ENCODE measurements at regions of chr5 and their contacts with region 1.

Region 1: DNA sequence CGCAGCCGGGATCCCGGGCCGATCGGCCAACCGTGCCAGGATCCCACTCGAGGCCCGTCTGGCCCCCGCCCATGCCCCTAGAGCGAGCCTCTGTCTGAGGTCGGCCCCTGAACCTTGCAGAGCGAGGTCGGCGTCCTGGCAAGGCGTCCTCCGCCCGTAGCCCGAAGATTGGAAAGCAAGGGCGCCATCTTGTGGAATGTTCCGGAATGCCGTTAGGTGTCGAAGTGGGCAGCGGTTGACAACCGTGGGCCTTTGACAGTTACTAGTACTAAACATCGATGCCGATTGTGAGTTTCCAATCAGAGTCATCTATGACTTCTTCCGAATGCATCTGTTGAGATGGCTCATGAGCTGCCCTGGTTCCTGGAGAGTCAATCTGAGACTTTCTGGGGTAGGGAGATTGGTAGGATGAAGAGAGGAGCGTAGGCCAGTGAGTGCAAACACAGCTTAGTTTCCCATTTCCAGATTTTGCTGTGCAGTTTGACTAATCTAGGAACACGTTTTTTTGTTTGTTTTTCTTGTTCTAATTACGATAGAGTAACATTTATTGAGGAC is 923 bp upstream of the PLK2 start:
- DNase-seq: peak; percentile 84 to 85
- ATAC-seq: peak; percentile 79 to 85
- H3K4me3 ChIP-seq: peak overlapping the region; percentile 70 to 92 (median 81)
- H3K27ac ChIP-seq: peak overlapping the region; percentile 90 to 96 (median 93)
- H3K4me1 ChIP-seq: no peaks in the 10 kb centered on the region
- H3K27me3 ChIP-seq: no peaks in the 10 kb centered on the region
- CTCF ChIP-seq: peak; percentile 49 to 77 (median 74)
- POLR2A ChIP-seq: no peak

Region 2: DNA sequence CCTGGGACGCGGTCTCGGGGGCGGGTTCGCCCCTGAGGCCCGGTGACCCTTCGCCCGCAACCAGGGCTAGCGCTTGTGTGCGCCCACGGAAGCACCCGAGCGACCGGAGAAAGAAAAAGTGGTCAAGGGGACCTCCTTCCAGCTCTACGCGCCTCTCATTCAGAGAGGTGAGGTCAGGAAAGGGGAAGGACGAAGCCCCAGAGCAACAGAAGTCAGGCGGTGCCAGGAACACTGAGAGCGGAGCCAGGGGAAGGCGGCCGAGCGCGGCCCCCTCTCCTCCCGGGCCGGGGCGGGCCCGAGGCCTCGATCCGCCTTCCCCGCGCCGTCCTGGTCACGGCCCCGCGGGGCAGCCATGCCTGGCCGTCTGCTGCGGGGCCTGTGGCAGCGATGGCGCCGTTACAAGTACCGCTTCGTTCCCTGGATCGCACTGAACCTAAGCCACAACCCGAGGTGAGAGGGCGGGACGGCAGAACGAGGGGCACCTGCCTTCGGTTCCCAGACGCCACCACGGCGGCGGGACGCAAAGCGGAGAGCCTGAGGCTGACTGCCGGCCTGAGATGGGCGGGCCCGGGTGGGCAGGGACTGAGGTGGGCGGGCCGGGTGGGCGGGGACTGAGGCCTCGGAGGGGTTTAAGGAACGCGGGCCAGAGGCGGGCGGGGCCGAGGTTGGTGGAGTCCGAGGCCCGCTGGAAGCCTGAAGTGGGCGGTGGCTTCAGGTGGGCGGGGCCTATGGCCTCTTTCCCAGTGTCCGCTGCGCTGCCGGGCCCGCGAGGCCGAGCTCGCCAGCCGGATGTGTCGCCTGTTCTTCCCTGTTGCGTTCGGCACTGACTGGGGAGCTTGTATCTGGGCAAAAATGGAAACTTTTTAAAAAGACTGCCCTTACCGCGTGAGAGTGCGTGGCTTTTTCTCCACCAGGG is 1551.3 kb before region 1 on chr5 and contains the start of gene SETD9:
- in situ Hi-C with region 1: loop called in 1 of 4 experiments (anchors 25 kb)
- intact Hi-C with region 1: loop called (anchors 5 kb)
- DNase-seq: peak; percentile 96 to 97
- ATAC-seq: peak; percentile 85 to 91
- H3K4me3 ChIP-seq: peak within 1 kb of the TSS; percentile 67 to 96 (median 80)
- H3K27ac ChIP-seq: peak within 1 kb of the TSS; percentile 86 to 96 (median 90)
- H3K4me1 ChIP-seq: peaks cover 5 to 10% of the 10 kb centered on the region in 2 donors
- H3K27me3 ChIP-seq: no peaks in the 10 kb centered on the region
- CTCF ChIP-seq: no peak
- POLR2A ChIP-seq: peak; percentile 66 to 73
- total RNA-seq, gene SETD9: 7.0 to 29.1 (median 13.9) TPM

Region 3: GRCh38 chr5:57499262-57500050 is 961.4 kb before region 1 on chr5:
- in situ Hi-C with region 1: loop called (anchors 10 kb)
- intact Hi-C with region 1: loop called (anchors 1 kb)
- DNase-seq: no peak
- ATAC-seq: peak; percentile 68 to 71
- H3K4me3 ChIP-seq: peak overlapping the region in 2 of 4 donors; percentile 25 to 49
- H3K27ac ChIP-seq: no peak overlapping the region
- H3K4me1 ChIP-seq: peaks cover 0 to 11% of the 10 kb centered on the region in 2 donors
- H3K27me3 ChIP-seq: no peaks in the 10 kb centered on the region
- CTCF ChIP-seq: peak; percentile 36 to 76 (median 55)
- POLR2A ChIP-seq: no peak

Region 4: GRCh38 chr5:57692582-57693487 is 768.0 kb before region 1 on chr5:
- in situ Hi-C with region 1: no loop called
- intact Hi-C with region 1: loop called (anchors 5 kb)
- DNase-seq: peak; percentile 79 to 87
- ATAC-seq: peak; percentile 99 to 100
- H3K4me3 ChIP-seq: peak overlapping the region in 1 of 4 donors; percentile 7
- H3K27ac ChIP-seq: peak overlapping the region; percentile 39 to 61 (median 54)
- H3K4me1 ChIP-seq: peaks cover 11 to 16% of the 10 kb centered on the region in 2 donors
- H3K27me3 ChIP-seq: no peaks in the 10 kb centered on the region
- CTCF ChIP-seq: no peak
- POLR2A ChIP-seq: no peak

Region 5: DNA sequence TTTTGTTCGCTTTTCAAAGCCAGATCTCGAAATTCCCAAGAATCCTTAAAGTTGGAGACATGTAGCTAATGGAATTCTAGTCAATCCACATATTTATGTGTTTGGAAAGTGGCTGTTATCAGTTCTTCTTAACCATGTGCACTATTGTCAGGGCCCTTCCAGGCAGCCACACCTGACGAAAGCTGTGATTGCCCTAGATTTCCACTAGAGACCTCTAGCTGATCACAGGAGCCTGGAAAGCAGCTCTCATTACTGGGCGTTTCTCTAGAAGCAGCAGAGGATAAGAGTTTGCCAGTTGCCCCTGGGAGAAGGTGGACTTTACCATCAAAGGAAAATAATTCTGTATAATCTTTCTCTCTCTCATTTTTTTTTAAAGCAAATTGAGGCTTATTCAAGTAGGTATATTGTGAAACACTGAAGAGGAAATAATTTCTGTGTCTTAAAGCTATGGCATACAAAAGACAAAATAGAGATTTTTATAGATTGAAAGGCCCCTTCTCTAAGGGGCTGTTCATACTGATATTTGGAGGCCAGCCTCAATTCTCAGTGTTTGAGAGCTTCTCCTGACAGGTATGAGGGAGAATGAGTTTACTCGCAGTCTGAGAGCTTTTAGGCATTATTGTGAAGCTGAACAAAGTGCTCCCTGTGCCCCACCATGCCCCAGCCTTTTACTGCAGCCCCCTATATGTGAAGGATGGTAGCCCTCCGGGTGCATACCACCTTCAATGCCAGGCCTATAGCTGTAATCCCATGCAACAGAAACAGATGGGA is 572.8 kb before region 1 on chr5:
- in situ Hi-C with region 1: loop called (anchors 10 to 25 kb)
- intact Hi-C with region 1: loop called (anchors 1 kb)
- DNase-seq: peak in 1 of 2 donors; percentile 13
- ATAC-seq: peak in 1 of 2 donors; percentile 85
- H3K4me3 ChIP-seq: no peak overlapping the region
- H3K27ac ChIP-seq: no peak overlapping the region
- H3K4me1 ChIP-seq: no peaks in the 10 kb centered on the region
- H3K27me3 ChIP-seq: no peaks in the 10 kb centered on the region
- CTCF ChIP-seq: peak; percentile 17 to 56 (median 31)
- POLR2A ChIP-seq: no peak

Region 6: DNA sequence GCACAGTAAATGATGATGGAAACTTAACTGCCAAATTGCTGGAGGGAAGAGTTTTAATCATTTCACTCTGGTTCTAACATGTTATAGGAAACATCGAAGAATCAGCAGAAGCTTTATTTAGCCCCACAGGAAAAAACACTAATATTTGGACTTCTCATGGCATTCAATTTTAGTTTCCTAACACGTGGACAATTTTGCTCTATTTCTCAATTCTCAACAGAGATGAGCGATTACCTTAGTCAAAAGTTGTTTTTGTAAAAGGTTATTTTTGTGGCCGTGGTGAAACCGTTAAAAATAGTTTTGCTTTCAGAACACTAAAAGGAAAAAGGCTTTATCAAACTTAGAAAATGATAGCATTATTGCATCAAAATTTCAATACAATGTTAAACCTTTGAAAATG is 236.1 kb before region 1 on chr5:
- in situ Hi-C with region 1: no loop called
- intact Hi-C with region 1: loop called (anchors 2 kb)
- DNase-seq: no peak
- ATAC-seq: no peak
- H3K4me3 ChIP-seq: no peak overlapping the region
- H3K27ac ChIP-seq: no peak overlapping the region
- H3K4me1 ChIP-seq: peaks cover 21% of the 10 kb centered on the region in 2 donors
- H3K27me3 ChIP-seq: no peaks in the 10 kb centered on the region
- CTCF ChIP-seq: no peak
- POLR2A ChIP-seq: no peak